ENCODE measurements at regions of chr10 and their contacts with region 1.

Region 1: GRCh38 chr10:103605359-103606095 is 112.0 kb downstream of the NEURL1 start:
- DNase-seq: no peak

Region 2: DNA sequence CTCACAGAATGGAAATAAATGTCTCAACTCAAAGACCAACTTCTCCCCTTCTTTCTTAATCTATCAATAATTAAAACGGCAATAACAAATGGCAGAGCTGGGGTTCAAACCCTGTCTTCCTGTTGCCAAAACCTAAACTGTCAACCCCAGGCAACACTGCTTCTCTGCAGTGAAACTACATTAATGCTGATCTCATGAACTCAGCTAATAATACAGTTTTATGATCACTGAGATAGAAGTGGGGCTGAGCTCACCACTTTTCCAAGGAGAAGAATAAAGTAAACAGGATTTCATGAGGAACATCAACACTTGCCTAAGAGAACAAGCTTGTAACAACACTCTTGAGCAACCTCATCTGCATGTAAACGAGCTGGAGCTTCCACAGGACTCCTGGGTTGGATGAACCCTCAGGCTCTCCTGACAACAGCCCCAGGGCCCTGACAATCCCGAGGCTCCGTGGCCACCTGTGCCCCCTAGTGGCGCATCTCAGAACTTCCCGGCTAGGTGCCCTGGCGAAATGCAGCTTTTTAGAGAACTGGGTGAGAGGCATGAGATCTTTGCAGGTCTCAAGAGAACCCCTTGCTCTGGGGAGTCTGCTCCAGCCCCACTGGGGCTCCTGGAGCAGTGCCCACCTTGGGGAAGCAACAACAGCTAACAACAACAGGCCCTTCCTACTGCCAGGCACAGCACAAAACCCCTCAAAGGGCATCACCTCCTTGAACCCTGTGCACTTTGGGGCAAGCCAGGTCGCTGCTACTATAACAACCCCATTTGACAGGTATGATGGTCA is 80.5 kb after region 1 on chr10:
- intact Hi-C with region 1: loop called (anchors 2 kb)
- DNase-seq: peak; percentile 84

Measured in cardiac septum (tissue), 1 donor.